ENCODE measurements at regions of chr12 and their contacts with region 1.

Region 1: GRCh38 chr12:106357549-106358395 is at the start of gene POLR3B:
- DNase-seq: peak; percentile 97
- H3K4me3 Mint-ChIP-seq: peak within 1 kb of the TSS; percentile 93
- H3K27ac Mint-ChIP-seq: peak within 1 kb of the TSS; percentile 92
- H3K4me1 Mint-ChIP-seq: peaks cover 15% of the 10 kb centered on the region
- H3K27me3 Mint-ChIP-seq: no peaks in the 10 kb centered on the region
- total RNA-seq, gene POLR3B: 6.2 to 7.3 TPM

Region 2: DNA sequence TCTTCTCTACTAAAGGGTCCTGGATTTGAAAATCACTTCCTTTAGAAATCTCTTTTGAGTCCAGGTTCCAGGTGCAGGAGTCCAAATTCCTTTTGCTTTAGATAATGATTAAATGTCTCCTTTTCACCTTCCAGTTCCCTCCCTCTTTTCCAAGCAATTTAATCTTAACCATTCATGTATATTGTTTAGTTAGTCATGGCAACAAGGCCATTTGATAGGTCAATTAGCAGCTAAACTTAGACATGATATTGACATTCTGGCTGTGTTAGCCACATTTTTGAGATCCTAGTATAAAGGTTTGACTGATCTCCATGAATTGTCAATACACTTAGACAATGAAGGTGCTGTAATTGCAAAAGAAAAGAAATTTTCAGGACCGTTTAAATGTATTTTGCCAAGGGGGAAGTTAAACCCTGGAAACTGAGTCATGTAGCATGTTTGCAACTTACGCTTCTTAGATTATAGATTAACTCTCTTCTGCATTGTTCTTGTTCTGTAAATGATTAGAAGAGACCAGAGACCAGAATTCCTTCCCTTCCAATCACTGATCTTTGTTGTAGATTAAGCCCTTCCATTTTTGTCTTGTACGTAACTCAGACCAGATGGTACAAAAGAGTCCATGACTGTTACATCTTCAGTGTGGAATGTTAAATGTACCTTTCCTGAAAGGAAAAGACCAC is 1039.7 kb before region 1 on chr12:
- CTCF ChIA-PET with region 1: no interaction called
- POLR2A ChIA-PET with region 1: no interaction called
- intact Hi-C with region 1: no loop called
- DNase-seq: no peak
- H3K4me3 Mint-ChIP-seq: no peak overlapping the region
- H3K27ac Mint-ChIP-seq: no peak overlapping the region
- H3K4me1 Mint-ChIP-seq: peaks cover 13% of the 10 kb centered on the region
- H3K27me3 Mint-ChIP-seq: no peaks in the 10 kb centered on the region

Region 3: GRCh38 chr12:106302401-106303201 is 55.2 kb before region 1 on chr12 and contains the start of gene TCP11L2:
- CTCF ChIA-PET with region 1: interaction called, 21 read pairs
- POLR2A ChIA-PET with region 1: interaction called, 10 read pairs
- intact Hi-C with region 1: loop called (anchors 1 kb)
- DNase-seq: peak; percentile 91
- H3K4me3 Mint-ChIP-seq: peak within 1 kb of the TSS; percentile 89
- H3K27ac Mint-ChIP-seq: peak within 1 kb of the TSS; percentile 99
- H3K4me1 Mint-ChIP-seq: peaks cover 52% of the 10 kb centered on the region
- H3K27me3 Mint-ChIP-seq: no peaks in the 10 kb centered on the region
- total RNA-seq, gene TCP11L2: 8.8 to 10.3 TPM

Region 4: GRCh38 chr12:106841510-106842302 is 483.9 kb after region 1 on chr12:
- CTCF ChIA-PET with region 1: interaction called, 21 read pairs
- POLR2A ChIA-PET with region 1: no interaction called
- intact Hi-C with region 1: no loop called
- DNase-seq: peak; percentile 14
- H3K4me3 Mint-ChIP-seq: no peak overlapping the region
- H3K27ac Mint-ChIP-seq: no peak overlapping the region
- H3K4me1 Mint-ChIP-seq: peaks cover 15% of the 10 kb centered on the region
- H3K27me3 Mint-ChIP-seq: no peaks in the 10 kb centered on the region

Region 5: GRCh38 chr12:106955377-106956047 is 597.7 kb after region 1 on chr12 and contains the start of gene TMEM263:
- CTCF ChIA-PET with region 1: interaction called, 8 read pairs
- POLR2A ChIA-PET with region 1: no interaction called
- intact Hi-C with region 1: loop called (anchors 1 kb)
- DNase-seq: peak; percentile 94
- H3K4me3 Mint-ChIP-seq: peak within 1 kb of the TSS; percentile 96
- H3K27ac Mint-ChIP-seq: peak within 1 kb of the TSS; percentile 86
- H3K4me1 Mint-ChIP-seq: peaks cover 16% of the 10 kb centered on the region
- H3K27me3 Mint-ChIP-seq: no peaks in the 10 kb centered on the region
- total RNA-seq, gene TMEM263: 37.8 to 38.3 TPM

Region 6: DNA sequence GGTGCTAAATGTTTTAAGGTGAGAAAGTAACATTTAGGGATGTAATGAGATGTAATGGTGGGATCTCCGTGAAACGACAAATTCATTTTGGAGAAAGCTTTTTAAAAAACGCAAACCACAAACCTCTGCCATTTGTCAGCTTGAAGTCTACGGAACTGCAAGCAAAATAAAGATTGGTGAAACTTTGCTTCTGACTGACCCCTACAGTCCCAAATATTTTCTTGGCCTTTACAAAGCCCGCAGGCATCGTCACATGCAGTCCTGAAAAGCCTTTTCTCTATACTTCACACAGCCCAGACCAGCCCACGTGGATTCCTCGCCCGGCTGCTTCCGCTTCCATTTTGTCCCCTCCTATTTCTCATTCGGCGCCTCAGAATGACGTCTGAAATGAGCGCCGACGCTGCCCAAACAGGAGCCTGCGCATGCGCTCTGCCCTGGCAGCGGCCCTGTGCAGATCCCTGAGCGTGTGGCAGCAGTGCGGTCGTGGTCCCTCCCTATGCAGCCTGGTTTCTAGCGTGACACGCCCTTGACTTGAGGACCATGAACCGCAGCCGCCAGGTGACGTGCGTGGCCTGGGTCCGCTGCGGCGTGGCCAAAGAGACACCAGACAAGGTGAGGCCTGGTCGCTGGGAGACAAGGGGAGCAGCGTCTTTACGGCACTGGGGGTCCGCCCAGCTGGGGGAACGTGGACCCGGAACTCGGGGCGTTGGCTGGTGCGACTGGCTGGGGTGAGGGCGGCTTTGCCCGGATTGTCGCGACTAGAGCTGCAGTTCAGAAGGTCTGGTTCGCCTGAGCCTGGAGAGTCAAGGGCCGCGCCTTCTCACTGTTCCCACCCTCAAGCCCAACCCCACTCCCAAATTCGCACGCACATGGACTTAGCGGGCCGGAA is 1327.8 kb after region 1 on chr12 and contains the start of gene PWP1:
- CTCF ChIA-PET with region 1: interaction called, 3 read pairs
- POLR2A ChIA-PET with region 1: no interaction called
- intact Hi-C with region 1: loop called (anchors 5 kb)
- DNase-seq: peak; percentile 96
- H3K4me3 Mint-ChIP-seq: peak within 1 kb of the TSS; percentile 92
- H3K27ac Mint-ChIP-seq: peak within 1 kb of the TSS; percentile 98
- H3K4me1 Mint-ChIP-seq: peaks cover 25% of the 10 kb centered on the region
- H3K27me3 Mint-ChIP-seq: peaks cover 1% of the 10 kb centered on the region
- total RNA-seq, gene PWP1: 44.0 to 47.0 TPM